ENCODE measurements at regions of chr3 and their contacts with region 1.

Region 1: DNA sequence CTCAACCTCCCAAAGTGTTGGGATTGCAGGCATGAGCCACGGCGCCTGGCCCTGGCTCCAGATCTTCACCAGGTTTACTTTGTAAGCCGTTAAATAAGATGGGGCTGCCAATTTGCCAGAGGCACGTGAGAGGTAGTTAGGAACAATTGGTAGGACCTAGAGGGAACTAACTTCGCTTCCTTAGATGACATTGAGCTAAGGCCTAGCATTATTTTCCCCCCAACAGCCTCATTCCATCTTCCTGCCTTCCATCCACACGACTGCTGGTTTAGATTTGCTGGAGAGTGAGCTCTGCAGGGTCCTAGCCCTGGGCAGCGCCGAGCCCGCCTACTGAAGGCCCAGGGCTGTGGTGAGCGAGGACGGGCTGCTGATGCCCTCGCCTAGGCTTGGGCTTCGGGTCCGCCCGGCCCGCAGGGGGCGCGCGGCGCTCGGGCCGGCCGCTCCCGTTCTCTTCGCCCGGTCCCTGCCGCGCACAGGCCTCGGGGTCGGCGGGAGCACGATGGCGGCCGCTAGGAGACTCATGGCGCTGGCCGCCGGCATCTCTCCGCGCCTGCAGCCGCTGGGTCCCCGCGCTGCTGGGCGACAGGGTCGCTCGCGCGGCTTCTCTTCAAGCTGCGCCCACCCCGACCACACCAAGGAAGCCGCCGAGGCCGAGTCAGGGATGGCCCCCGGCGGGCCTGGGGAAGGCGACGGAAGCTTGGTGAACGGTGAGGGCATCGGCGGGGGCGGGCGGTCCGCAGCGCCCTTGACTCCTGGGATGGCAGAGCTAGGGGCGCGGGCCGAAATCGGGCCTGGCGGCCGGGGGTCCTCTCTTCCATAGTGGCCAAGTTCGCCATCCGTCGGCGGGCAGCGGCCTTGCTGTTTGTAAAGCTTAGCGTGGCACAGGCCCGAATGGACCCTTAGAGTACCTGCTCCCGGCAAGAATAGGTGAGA is 21.9 kb downstream of the DHX30 start:
- DNase-seq: no peak
- H3K4me3 ChIP-seq: peak overlapping the region; percentile 93
- CTCF ChIP-seq: peak; percentile 62

Region 2: DNA sequence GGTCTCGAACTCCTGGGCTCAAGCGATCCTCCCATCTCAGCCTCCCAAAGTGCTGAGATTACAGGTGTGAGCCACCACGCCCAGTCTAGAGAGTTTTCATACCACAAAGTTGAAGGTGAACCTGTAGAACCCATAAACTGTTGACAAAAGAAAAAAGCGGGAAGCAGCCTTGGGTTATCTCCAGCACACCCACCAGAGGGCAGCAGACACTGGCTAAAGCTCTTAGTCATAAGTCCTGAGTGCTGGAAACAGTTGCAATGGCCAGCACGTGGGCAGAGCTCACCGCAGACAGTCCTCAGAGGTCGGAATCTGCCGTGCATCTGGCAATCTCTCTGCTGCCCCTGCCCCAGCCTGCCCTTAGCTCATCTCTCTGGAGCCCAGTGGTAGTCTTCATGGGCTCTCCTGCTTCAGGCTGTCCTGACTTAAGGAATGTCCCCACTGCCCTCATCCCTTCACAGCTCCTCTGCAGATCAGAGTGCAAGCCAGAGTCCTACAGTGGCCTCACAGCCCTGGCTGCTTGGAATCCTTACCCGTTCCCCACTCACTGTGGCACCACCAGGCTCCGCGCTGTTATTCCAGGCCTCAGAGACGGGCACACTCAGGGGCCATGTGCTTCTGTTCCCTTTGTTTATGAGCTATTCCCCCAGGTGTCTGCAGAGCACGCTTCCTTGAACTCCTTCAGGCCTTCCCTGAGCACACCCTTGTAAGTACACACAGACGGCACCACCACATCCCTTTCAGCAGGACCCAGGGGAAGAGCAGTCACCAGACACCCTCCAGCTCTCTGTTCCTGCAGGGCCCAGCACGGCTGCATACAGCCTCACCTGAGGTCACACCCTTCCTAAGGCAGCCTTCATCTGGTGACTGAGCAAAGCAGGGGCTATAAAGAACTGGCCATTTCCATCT is 302.5 kb before region 1 on chr3:
- CTCF ChIA-PET with region 1: interaction called, 38 read pairs
- POLR2A ChIA-PET with region 1: no interaction called
- DNase-seq: peak; percentile 47
- H3K4me3 ChIP-seq: no peak overlapping the region
- CTCF ChIP-seq: peak; percentile 82

Region 3: DNA sequence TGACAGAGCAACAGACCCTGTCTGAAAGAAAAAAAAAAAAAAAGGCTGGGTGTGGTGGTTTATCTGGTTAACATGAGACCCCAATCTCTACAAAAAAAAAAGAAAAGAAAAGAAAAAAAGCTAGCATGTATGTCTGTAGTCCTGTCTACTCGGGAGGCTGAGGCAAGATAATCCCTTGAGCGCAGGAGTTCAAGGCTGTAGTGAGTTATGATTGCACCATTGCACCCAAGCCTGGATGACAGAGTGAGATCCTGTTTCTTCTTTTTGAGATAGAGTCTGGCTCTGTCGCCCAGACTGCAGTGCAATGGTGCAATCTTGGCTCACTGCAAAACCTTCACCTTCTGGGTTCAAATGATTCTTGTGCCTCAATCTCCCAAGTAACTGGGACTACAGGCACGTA is 30.3 kb before region 1 on chr3:
- CTCF ChIA-PET with region 1: no interaction called
- POLR2A ChIA-PET with region 1: no interaction called
- DNase-seq: no peak
- H3K4me3 ChIP-seq: no peak overlapping the region
- CTCF ChIP-seq: no peak

Region 4: DNA sequence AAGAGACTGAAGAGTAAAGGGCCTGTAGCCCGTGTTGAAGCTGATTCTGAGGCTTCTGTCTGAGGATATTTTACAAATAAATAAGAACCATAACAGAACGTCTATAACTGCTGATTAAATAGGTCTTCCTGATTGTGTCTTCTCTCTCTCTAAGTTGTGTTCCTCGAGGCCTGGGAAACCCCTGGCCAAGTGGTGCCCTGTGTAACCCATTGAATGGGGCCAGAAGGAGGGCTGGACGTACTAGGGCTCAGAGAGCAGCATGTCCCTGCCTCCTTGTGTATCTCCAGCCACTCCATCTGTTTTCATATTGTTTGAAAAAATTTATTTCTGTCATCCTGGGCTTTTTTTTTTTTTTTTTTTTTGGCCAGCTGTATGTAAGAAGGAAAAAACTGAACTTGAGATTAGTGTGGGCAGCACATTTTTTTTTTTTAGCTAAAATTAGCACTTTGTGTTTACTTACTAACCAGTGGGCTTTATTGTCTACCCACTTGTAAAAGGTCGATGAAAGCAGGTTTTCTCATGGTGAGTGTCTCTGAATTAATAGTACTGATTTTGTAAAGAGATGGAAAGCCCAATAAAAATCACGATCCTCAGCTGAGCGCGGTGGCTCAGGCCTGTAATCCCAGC is 11.1 kb before region 1 on chr3:
- CTCF ChIA-PET with region 1: interaction called, 96 read pairs
- POLR2A ChIA-PET with region 1: interaction called, 3 read pairs
- DNase-seq: no peak
- H3K4me3 ChIP-seq: no peak overlapping the region
- CTCF ChIP-seq: no peak

Region 5: DNA sequence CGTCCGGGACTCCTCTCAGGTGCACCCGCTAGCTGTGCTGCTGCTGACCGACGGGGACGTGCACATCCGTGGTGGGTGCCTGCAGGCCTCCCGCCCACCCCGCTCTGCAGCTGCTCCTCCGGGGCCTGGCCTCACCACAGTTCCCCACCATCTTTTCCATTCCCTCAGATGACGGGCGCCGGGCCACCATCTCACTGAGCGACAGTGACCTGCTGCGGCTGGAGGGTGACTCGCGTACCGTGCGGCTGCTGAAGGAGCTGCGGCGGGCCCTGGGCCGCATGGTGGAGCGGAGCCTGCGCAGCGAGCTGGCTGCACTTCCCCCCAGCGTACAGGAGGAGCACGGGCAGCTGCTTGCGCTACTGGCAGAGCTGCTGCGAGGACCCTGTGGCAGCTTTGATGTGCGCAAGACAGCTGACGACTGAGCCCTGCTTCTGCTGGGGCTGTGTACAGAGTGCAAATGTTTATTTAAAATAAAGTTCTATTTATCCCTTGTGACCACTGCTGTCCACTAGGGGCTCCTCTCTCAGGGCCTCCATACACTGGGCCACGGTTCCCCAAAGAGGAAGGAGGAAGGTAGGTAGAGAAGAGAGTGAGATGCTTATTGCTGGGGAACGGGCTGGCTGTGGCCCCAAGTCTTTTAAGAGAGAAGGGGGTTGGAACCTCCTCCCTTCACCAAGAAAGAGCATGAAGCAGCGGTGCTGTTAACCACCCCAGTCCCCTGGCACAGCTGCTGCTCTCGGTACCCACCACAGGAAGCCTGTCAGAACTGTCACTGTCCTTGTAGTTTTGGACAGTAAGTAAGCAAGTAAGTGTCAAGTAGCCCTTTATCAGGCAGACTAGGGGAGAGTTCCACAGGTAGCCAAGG is 25.1 kb after region 1 on chr3:
- CTCF ChIA-PET with region 1: interaction called, 10 read pairs
- POLR2A ChIA-PET with region 1: interaction called, 4 read pairs
- DNase-seq: no peak
- H3K4me3 ChIP-seq: no peak overlapping the region
- CTCF ChIP-seq: peak; percentile 39

Region 6: GRCh38 chr3:47989981-47990440 is 165.2 kb after region 1 on chr3:
- CTCF ChIA-PET with region 1: interaction called, 10 read pairs
- POLR2A ChIA-PET with region 1: no interaction called
- DNase-seq: peak; percentile 79
- H3K4me3 ChIP-seq: no peak overlapping the region
- CTCF ChIP-seq: peak; percentile 78

Region 7: DNA sequence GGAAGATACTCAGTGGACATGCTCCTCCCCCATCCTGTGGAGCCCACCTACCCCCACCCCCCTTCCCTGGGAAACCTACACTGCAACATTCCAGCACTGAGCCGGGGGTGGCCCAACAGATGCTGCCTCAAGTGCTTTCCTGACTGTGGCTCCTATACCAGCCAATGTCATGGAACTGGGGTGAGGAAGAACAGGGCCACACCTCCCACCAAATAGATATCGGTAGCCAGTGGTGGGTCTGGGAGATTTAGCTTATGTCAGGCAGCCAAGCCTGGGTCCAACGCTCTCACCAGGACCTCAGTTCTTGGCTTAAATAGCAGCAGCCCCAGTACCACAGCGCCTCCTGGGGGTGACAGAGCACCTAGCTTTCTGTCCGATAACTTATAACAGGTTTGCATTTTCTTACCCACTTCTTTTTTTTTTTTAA is 333.2 kb after region 1 on chr3:
- CTCF ChIA-PET with region 1: interaction called, 61 read pairs
- POLR2A ChIA-PET with region 1: no interaction called
- DNase-seq: peak; percentile 5
- H3K4me3 ChIP-seq: no peak overlapping the region
- CTCF ChIP-seq: peak; percentile 73

Region 8: GRCh38 chr3:48548729-48549705 is 724.2 kb after region 1 on chr3:
- CTCF ChIA-PET with region 1: no interaction called
- POLR2A ChIA-PET with region 1: no interaction called
- DNase-seq: no peak
- H3K4me3 ChIP-seq: no peak overlapping the region
- CTCF ChIP-seq: peak; percentile 95

Measured in AG04449 (cell line).